H1 (cell line): ENCODE measurements at regions of chr3 and their contacts with region 1.

Region 1: GRCh38 chr3:62368705-62369475 is 4.5 kb downstream of the FEZF2 start:
- DNase-seq: peak in 1 of 2 experiments; percentile 83
- H3K4me3 ChIP-seq: peak overlapping the region; percentile 46 to 60 (median 52)
- H3K27ac ChIP-seq: no peak overlapping the region
- H3K4me1 ChIP-seq: peaks cover 18 to 60% (median 40%) of the 10 kb centered on the region in 4 experiments
- H3K27me3 ChIP-seq: peaks cover 83 to 100% (median 97%) of the 10 kb centered on the region in 4 experiments
- CTCF ChIP-seq: peak in 2 of 3 experiments; percentile 58 to 61; a peak in 3 of 4 replicates
- EP300 ChIP-seq: peak in 1 of 2 experiments; percentile 81; a peak in 1 of 3 replicates
- POLR2A ChIP-seq: no peak
- RAD21 ChIP-seq: peak; percentile 37 to 49; a peak in 3 of 4 replicates

Region 2: GRCh38 chr3:62415312-62415801 is 46.5 kb after region 1 on chr3:
- CTCF ChIA-PET with region 1: interaction called, 11 read pairs
- POLR2A ChIA-PET with region 1: interaction called, 4 read pairs
- DNase-seq: peak; percentile 68 to 83
- H3K4me3 ChIP-seq: peak overlapping the region in 3 of 4 experiments; percentile 22 to 55 (median 34); a peak in 6 of 8 replicates
- H3K27ac ChIP-seq: no peak overlapping the region
- H3K4me1 ChIP-seq: peaks cover 5 to 19% (median 10%) of the 10 kb centered on the region in 4 experiments
- H3K27me3 ChIP-seq: peaks cover 0 to 29% (median 12%) of the 10 kb centered on the region in 4 experiments; a peak in 3 of 7 replicates
- CTCF ChIP-seq: no peak
- EP300 ChIP-seq: peak in 1 of 2 experiments; percentile 88; a peak in 1 of 3 replicates
- POLR2A ChIP-seq: no peak
- RAD21 ChIP-seq: no peak; a peak in 1 of 4 replicates